K562 (cell line): ENCODE measurements at regions of chr14 and their contacts with region 1.

Region 1: DNA sequence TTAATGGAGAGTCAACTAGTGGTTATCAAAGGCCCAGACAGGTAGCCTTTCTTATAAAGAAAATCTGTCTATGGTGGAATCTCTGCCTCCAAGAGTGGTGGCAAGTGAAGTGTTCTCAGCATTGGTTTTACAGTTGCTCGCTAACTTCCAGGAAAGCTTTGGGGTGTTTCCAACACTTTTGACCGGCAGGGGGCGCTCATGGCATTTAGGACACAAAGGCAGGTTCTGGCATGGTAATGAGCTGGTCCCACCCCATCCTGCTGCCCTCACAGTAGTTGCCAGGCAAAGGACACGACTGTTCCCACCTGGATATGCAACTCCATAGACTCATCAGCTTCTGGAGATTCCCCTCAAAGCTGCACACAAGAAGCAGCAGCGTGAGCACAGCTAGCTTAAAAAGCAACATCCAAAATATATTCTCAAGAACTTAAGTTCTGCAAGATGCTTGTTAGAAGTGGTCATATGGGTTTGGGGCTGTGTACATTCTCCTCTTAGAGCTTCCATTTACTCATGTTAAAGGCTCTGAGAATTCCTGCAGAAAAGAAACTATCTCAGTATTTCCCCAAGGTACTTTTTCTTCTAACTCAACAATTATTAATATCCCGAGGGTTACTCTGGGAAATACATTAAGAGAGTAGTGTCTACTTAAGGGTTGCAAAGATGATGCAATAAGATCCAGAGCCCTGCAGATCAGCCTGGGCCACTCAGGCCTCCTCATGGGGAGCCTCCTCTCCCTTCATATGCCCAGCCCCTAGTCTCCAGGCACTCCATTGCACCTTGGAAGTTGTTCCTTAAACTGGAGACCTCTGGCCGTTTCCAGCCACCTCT is 14.8 kb downstream of the PROX2 start:
- DNase-seq: peak; percentile 71 to 85 (median 76)
- ATAC-seq: peak; percentile 95
- H3K4me3 ChIP-seq: no peak overlapping the region
- H3K27ac ChIP-seq: no peak overlapping the region
- H3K4me1 ChIP-seq: no peaks in the 10 kb centered on the region; a peak in 1 of 5 replicates
- H3K27me3 ChIP-seq: no peaks in the 10 kb centered on the region
- CTCF ChIP-seq: peak; percentile 77 to 85 (median 81)
- EP300 ChIP-seq: no peak
- POLR2A ChIP-seq: no peak
- RAD21 ChIP-seq: peak; percentile 72 to 79

Region 2: GRCh38 chr14:74846168-74846567 is 15.0 kb before region 1 on chr14:
- CTCF ChIA-PET with region 1: no interaction called
- POLR2A ChIA-PET with region 1: interaction called, 11 read pairs
- in situ Hi-C with region 1: no loop called
- intact Hi-C with region 1: no loop called
- DNase-seq: no peak
- ATAC-seq: no peak
- H3K4me3 ChIP-seq: no peak overlapping the region
- H3K27ac ChIP-seq: no peak overlapping the region
- H3K4me1 ChIP-seq: peaks cover 0 to 7% of the 10 kb centered on the region in 2 experiments; a peak in 2 of 5 replicates
- H3K27me3 ChIP-seq: no peaks in the 10 kb centered on the region
- CTCF ChIP-seq: no peak
- EP300 ChIP-seq: no peak
- POLR2A ChIP-seq: no peak
- RAD21 ChIP-seq: no peak

Region 3: GRCh38 chr14:74905375-74906142 is 44.4 kb after region 1 on chr14:
- CTCF ChIA-PET with region 1: interaction called, 23 read pairs
- POLR2A ChIA-PET with region 1: interaction called, 6 read pairs
- in situ Hi-C with region 1: loop called (anchors 5 kb)
- intact Hi-C with region 1: loop called (anchors 1 kb)
- DNase-seq: peak; percentile 69 to 74 (median 70)
- ATAC-seq: peak; percentile 83
- H3K4me3 ChIP-seq: no peak overlapping the region
- H3K27ac ChIP-seq: no peak overlapping the region; the same call in 2 of the 3 replicates
- H3K4me1 ChIP-seq: peaks cover 10 to 30% of the 10 kb centered on the region in 2 experiments; a peak in 3 of 5 replicates
- H3K27me3 ChIP-seq: no peaks in the 10 kb centered on the region
- CTCF ChIP-seq: peak; percentile 81 to 94 (median 83)
- EP300 ChIP-seq: no peak
- POLR2A ChIP-seq: peak; percentile 49; the same call in 1 of the 2 replicates
- RAD21 ChIP-seq: peak; percentile 67 to 77

Region 4: GRCh38 chr14:75069045-75069810 is 208.1 kb after region 1 on chr14 and contains the start of gene ZC2HC1C:
- CTCF ChIA-PET with region 1: no interaction called
- POLR2A ChIA-PET with region 1: no interaction called
- in situ Hi-C with region 1: no loop called
- intact Hi-C with region 1: no loop called
- DNase-seq: peak; percentile 93 to 95 (median 94)
- ATAC-seq: peak; percentile 90
- H3K4me3 ChIP-seq: peak within 1 kb of the TSS; percentile 41
- H3K27ac ChIP-seq: peak within 1 kb of the TSS; percentile 93
- H3K4me1 ChIP-seq: peaks cover 26 to 32% of the 10 kb centered on the region in 2 experiments; a peak in 4 of 5 replicates
- H3K27me3 ChIP-seq: no peaks in the 10 kb centered on the region
- CTCF ChIP-seq: no peak
- EP300 ChIP-seq: peak; percentile 48; the same call in 1 of the 2 replicates
- POLR2A ChIP-seq: peak; percentile 74; the same call in 1 of the 2 replicates
- RAD21 ChIP-seq: no peak
- polyA plus RNA-seq, gene ZC2HC1C: 7.0 to 9.2 TPM

Region 5: GRCh38 chr14:75088574-75089373 is 227.7 kb after region 1 on chr14:
- CTCF ChIA-PET with region 1: interaction called, 19 read pairs
- POLR2A ChIA-PET with region 1: no interaction called
- in situ Hi-C with region 1: no loop called
- intact Hi-C with region 1: loop called (anchors 1 kb)
- DNase-seq: peak; percentile 33 to 63 (median 37)
- ATAC-seq: peak; percentile 85
- H3K4me3 ChIP-seq: no peak overlapping the region
- H3K27ac ChIP-seq: no peak overlapping the region
- H3K4me1 ChIP-seq: no peaks in the 10 kb centered on the region
- H3K27me3 ChIP-seq: no peaks in the 10 kb centered on the region
- CTCF ChIP-seq: peak; percentile 61 to 84 (median 70)
- EP300 ChIP-seq: no peak
- POLR2A ChIP-seq: no peak
- RAD21 ChIP-seq: peak; percentile 74 to 90